ENCODE measurements at regions of chr15 and their contacts with region 1.

Region 1: GRCh38 chr15:98845107-98845884 is 162.3 kb downstream of the PGPEP1L start:
- DNase-seq: no peak
- H3K4me3 ChIP-seq: no peak overlapping the region
- H3K27ac ChIP-seq: no peak overlapping the region
- H3K4me1 ChIP-seq: peaks cover 20 to 44% of the 10 kb centered on the region in 2 donors
- H3K27me3 ChIP-seq: no peaks in the 10 kb centered on the region
- CTCF ChIP-seq: no peak
- POLR2A ChIP-seq: no peak

Region 2: DNA sequence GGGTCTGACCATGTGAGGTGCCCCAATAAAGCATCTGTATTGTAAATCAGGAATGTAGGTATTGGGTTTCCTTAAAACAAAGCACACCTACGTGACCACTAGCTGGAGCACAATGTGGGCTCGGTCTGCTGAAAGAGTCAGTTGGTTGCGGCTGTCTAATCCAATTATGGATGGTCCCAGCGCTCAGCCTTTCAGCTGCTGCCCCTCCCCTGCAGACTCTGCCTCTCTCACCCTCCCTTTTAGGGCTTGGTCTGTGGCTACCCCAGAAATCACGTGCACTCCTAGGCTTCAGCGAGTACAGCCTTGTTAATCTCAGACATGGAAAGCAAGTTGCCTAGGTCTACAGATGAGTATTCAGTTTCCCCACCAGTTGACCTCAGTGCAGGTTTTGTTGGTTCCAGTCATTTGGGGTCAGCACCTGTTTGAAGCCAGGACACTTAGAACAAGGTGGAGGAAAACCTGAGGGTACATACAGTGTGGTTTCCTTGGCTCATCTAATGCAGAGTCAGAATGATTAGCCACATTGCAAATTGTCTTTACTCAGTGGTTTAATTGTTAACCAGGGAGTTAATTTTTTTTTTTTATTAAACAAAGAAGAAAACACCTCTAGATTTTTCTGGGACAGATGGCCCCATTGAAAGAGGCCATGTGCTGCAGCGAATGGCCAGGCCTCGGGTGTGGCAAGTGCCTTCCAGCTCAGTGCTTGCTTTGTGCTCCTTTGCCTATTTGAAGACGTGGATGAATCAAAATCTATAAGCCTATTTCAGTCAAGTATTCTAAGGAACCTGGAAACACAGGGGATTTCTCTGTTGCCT is 59.3 kb before region 1 on chr15:
- intact Hi-C with region 1: loop called (anchors 5 kb)
- DNase-seq: no peak
- H3K4me3 ChIP-seq: no peak overlapping the region
- H3K27ac ChIP-seq: peak overlapping the region in 1 of 3 donors; percentile 3
- H3K4me1 ChIP-seq: peaks cover 20 to 33% of the 10 kb centered on the region in 2 donors
- H3K27me3 ChIP-seq: no peaks in the 10 kb centered on the region
- CTCF ChIP-seq: no peak
- POLR2A ChIP-seq: no peak

Region 3: GRCh38 chr15:99207672-99208071 is 362.4 kb after region 1 on chr15:
- intact Hi-C with region 1: no loop called
- DNase-seq: no peak
- H3K4me3 ChIP-seq: no peak overlapping the region
- H3K27ac ChIP-seq: no peak overlapping the region
- H3K4me1 ChIP-seq: no peaks in the 10 kb centered on the region
- H3K27me3 ChIP-seq: no peaks in the 10 kb centered on the region
- CTCF ChIP-seq: no peak
- POLR2A ChIP-seq: no peak

Measured in thyroid gland (tissue), 4 donors.